Ascending aorta (tissue), 2 donors: ENCODE measurements at regions of chr7 and their contacts with region 1.

Region 1: DNA sequence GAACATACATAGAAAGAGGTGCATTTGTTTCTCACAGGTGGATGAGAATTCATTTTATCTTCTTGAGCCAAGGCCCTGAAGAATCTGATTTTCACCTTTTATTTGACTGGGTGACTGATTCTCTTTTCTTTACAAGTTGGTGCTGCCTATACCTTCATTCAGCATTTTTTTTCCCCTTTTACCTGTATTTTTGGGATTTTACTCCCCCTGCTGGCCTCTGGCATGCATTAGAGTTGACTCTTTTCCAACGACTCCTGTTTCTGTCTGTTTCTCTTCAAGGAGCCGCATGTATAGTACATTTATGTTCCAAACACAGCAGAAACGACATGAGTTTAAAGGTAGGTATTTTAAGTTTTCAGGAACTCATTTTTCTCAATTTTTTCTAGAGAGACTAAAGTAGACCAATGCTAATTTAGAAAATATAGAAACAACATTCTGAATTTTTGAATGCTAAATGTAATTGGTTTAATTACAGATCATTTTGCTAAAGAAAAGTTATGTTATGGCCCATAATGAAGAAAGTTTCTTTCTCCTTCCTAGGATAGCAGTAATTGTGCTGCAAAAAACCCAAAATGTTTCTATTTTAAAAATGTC is 149.8 kb upstream of the HDAC9 start:
- DNase-seq: peak in 1 of 2 donors; percentile 67
- H3K4me3 ChIP-seq: no peak overlapping the region
- H3K27ac ChIP-seq: no peak overlapping the region
- H3K4me1 ChIP-seq: no peaks in the 10 kb centered on the region
- H3K27me3 ChIP-seq: no peaks in the 10 kb centered on the region
- CTCF ChIP-seq: peak; percentile 55 to 86 (median 79)

Region 2: DNA sequence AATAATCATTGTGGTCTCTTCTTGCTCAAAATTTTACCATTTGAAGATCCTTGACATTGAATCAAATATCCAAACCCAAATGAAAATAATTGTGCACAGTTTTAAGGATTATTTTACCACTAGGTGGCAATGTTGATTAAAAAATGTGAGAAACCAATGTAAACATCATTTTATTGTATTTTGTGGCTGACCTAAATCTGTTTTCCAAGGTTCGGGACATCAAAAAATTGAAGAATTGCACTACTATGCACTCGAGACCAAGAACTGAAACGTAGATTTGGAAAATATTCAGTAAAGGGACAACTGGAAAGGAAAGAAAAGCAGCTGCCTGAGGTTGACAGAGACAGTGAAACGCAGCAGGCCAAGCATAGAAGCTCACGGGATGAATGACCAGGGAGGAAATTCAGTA is 664.8 kb before region 1 on chr7:
- intact Hi-C with region 1: loop called (anchors 5 kb)
- DNase-seq: no peak
- H3K4me3 ChIP-seq: no peak overlapping the region
- H3K27ac ChIP-seq: peak overlapping the region in 1 of 2 donors; percentile 15
- H3K4me1 ChIP-seq: peaks cover 2 to 13% of the 10 kb centered on the region in 2 donors
- H3K27me3 ChIP-seq: no peaks in the 10 kb centered on the region
- CTCF ChIP-seq: peak; percentile 43 to 63 (median 57)

Region 3: GRCh38 chr7:17769918-17770317 is 575.8 kb before region 1 on chr7:
- intact Hi-C with region 1: loop called (anchors 5 kb)
- DNase-seq: peak in 1 of 2 donors; percentile 67
- H3K4me3 ChIP-seq: no peak overlapping the region
- H3K27ac ChIP-seq: no peak overlapping the region
- H3K4me1 ChIP-seq: no peaks in the 10 kb centered on the region
- H3K27me3 ChIP-seq: no peaks in the 10 kb centered on the region
- CTCF ChIP-seq: peak; percentile 10 to 56 (median 22)

Region 4: DNA sequence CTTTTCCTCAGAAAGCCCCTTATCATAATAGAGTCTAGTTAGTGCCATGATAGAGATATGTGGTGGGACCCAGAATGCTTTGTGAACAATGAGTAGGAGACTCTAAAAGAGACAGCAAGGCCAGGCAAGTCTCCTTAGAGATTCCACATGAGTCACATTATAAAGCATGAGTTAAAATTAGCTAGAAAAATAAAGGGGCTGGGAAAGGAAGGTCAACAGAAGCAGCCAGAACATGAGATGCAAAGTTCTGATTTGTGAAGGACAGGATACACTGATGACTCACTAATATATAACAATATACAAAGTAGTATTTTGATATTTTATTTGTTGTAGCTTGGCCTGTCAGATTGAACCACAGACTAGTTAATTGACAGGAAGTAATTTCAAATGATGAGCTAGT is 380.1 kb before region 1 on chr7:
- intact Hi-C with region 1: loop called (anchors 10 kb)
- DNase-seq: no peak
- H3K4me3 ChIP-seq: no peak overlapping the region
- H3K27ac ChIP-seq: no peak overlapping the region
- H3K4me1 ChIP-seq: no peaks in the 10 kb centered on the region
- H3K27me3 ChIP-seq: no peaks in the 10 kb centered on the region
- CTCF ChIP-seq: no peak

Region 5: DNA sequence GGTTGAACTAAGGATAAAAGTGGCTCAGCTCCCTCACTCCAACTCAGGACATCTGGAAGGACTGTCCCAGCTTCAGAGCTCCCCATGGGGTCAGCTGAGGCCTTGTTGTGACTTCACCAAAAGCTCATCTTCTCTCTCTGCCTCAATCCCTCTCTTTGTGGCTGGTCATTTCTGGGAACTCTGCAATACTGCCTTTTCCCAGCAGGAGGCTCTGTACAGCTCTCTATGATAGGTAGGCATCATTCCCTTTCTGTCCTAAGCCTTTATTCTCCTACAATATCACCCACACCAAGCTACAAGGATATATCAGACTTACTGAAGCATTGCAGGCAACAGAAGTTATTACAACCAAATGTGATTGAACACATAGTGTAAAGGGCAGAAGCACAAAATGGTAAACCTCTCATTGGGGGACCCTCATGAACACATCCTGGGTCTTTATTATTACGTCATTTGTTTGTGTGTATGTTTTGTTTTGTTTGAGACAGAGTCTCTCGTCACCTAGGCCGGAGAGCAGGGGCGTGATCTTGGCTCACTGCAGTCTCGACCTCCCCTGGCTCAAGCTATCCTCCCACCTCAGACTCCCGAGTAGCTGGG is 281.4 kb before region 1 on chr7:
- intact Hi-C with region 1: loop called (anchors 5 kb)
- DNase-seq: no peak
- H3K4me3 ChIP-seq: no peak overlapping the region
- H3K27ac ChIP-seq: no peak overlapping the region
- H3K4me1 ChIP-seq: no peaks in the 10 kb centered on the region
- H3K27me3 ChIP-seq: no peaks in the 10 kb centered on the region
- CTCF ChIP-seq: peak; percentile 30 to 57 (median 41)